ENCODE measurements at regions of chr11 and their contacts with region 1.

Region 1: DNA sequence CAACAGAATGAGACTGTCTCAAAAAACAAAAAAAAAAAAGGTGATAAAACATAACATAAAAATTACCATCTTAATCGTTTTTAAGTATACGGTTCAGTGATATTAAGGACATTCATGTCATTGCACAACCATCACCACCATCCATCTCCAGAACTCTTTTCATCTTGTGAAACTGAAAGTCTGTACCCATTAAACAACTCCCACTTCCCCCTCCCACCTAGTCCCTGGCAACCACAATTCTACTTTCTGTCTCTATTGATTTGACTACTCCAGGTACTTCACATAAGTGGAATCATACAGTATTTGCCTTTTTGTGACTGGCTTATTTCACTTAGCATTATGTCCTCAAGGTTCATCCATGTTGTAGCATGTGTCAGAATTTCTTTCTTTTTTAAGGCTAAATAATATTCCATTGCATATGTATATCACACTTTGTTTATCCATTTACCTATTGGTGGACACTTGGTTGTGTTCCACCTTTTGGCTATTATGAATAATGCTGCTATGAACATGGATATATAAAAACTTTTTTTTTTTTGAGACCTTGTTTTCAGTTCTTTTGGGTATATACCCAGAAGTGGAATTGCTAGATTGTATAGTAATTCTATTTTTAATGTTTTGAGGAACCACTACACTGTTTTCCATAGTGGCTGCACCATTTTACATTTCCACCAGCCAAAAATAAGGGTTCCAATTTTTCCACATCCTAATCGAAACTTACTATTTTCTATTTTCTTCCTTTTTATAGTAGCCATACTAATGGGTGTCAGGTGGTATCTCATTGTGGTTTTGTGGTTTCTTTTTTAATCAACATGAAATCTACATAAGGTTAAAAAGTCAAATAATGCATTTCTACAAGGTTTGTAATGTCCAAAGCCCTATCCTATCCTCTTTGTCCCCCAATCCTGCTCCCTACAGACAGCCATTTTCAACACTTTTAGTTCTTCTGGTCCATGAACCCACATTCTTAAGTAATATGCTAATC is 23.4 kb upstream of the PIK3C2A start:
- DNase-seq: peak; percentile 76
- ATAC-seq: peak; percentile 97
- H3K4me3 ChIP-seq: no peak overlapping the region
- H3K27ac ChIP-seq: no peak overlapping the region
- H3K4me1 ChIP-seq: peaks cover 15% of the 10 kb centered on the region
- H3K27me3 ChIP-seq: no peaks in the 10 kb centered on the region; a peak in 1 of 4 replicates
- CTCF ChIP-seq: no peak
- EP300 ChIP-seq: peak; percentile 49 to 81; a peak in 3 of 4 replicates
- POLR2A ChIP-seq: no peak
- RAD21 ChIP-seq: 0 out of 2 replicates have a peak, but pooled peaks have one; percentile 8

Region 2: DNA sequence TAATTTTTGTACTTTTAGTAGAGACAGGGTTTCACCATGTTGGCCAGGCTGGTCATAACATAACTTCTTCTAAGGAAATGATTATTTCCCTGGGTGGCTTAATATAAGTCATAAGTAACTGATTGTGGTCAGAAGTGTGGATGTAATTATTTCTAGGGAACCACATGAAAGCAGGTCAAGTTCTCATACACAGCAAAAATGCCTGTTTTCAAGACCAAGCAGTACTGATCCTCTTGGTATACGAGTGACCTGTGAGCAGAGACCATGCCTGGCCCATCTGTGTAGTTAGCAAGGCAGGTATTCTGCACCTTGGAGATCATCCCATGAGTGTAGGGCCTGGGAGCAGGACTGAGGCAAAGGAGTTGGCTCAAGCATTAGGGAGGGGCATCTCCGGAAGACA is 12.9 kb after region 1 on chr11:
- CTCF ChIA-PET with region 1: interaction called, 13 read pairs
- POLR2A ChIA-PET with region 1: no interaction called
- RAD21 ChIA-PET with region 1: interaction called, 3 read pairs
- SMC1A ChIA-PET with region 1: interaction called, 7 read pairs
- in situ Hi-C with region 1: no loop called
- intact Hi-C with region 1: no loop called
- DNase-seq: peak; percentile 52
- ATAC-seq: peak; percentile 98
- H3K4me3 ChIP-seq: no peak overlapping the region
- H3K27ac ChIP-seq: no peak overlapping the region
- H3K4me1 ChIP-seq: peaks cover 5% of the 10 kb centered on the region
- H3K27me3 ChIP-seq: peaks cover 0 to 3% of the 10 kb centered on the region in 2 experiments; a peak in 2 of 4 replicates
- CTCF ChIP-seq: no peak
- EP300 ChIP-seq: no peak
- POLR2A ChIP-seq: no peak
- RAD21 ChIP-seq: no peak

Region 3: GRCh38 chr11:17298302-17298701 is 67.1 kb after region 1 on chr11:
- CTCF ChIA-PET with region 1: interaction called, 10 read pairs
- POLR2A ChIA-PET with region 1: no interaction called
- RAD21 ChIA-PET with region 1: no interaction called
- SMC1A ChIA-PET with region 1: interaction called, 3 read pairs
- in situ Hi-C with region 1: no loop called
- intact Hi-C with region 1: loop called (anchors 5 kb)
- DNase-seq: no peak
- ATAC-seq: peak; percentile 91
- H3K4me3 ChIP-seq: no peak overlapping the region
- H3K27ac ChIP-seq: no peak overlapping the region
- H3K4me1 ChIP-seq: peaks cover 15% of the 10 kb centered on the region
- H3K27me3 ChIP-seq: no peaks in the 10 kb centered on the region
- CTCF ChIP-seq: no peak
- EP300 ChIP-seq: peak; percentile 13 to 30; a peak in 2 of 4 replicates
- POLR2A ChIP-seq: no peak
- RAD21 ChIP-seq: no peak

Region 4: DNA sequence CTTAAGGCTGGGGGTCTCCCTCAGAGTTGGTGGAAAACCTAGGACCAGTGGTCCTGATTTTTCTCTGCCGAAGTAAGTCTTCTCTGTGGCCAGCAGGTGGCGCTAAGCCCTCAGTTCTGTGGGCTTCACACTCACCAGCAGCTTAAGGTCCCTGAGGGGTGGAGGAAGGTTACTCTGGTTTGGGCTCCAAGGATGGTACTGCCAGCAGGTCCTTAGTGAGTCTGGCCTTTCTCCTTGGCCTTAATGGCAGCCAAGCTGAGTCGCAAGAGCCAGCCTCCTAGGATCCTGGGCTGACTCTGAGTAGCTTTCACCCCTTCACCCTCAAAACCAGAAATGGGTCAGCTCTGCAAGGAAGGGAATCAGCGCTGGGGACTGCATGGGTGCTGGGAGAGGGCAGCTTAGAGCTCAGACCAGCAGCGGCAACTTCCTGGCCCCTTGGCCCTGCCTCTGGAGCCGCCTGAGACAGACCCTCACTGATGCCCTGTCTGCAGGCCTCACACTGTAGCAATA is 152.9 kb after region 1 on chr11:
- CTCF ChIA-PET with region 1: interaction called, 40 read pairs
- POLR2A ChIA-PET with region 1: no interaction called
- RAD21 ChIA-PET with region 1: interaction called, 10 read pairs
- SMC1A ChIA-PET with region 1: interaction called, 11 read pairs
- in situ Hi-C with region 1: no loop called
- intact Hi-C with region 1: loop called (anchors 1 kb)
- DNase-seq: no peak
- ATAC-seq: peak; percentile 85
- H3K4me3 ChIP-seq: no peak overlapping the region
- H3K27ac ChIP-seq: no peak overlapping the region
- H3K4me1 ChIP-seq: no peaks in the 10 kb centered on the region
- H3K27me3 ChIP-seq: peaks cover 2% of the 10 kb centered on the region in 2 experiments; a peak in 3 of 4 replicates
- CTCF ChIP-seq: peak; percentile 82 to 90 (median 86)
- EP300 ChIP-seq: no peak
- POLR2A ChIP-seq: no peak
- RAD21 ChIP-seq: peak; percentile 89

Region 5: DNA sequence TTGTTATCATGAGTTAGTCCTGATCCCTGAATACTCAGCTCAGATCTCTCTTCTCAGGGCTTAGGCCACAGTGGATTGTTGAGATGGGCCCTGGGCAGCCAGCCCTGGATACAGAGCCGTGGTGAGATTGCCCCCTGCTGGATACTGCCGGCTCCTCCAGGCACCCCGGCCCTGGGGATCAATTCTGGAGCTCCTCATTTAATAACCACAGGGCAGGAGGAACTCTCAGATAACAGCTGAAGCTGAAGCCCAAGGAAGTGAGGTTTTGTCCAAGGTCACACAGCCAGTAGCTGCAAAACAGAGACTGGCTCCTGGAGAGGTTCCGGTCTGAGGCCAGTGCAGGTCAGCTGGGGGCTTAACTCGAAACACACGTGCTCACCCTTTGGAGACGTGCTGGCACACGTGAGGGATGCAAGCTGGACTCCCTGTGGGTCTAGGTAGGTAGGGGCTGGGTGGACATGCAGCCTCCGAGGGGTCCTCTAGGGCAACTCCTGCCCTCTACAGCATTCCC is 297.1 kb after region 1 on chr11:
- CTCF ChIA-PET with region 1: interaction called, 21 read pairs
- POLR2A ChIA-PET with region 1: no interaction called
- RAD21 ChIA-PET with region 1: interaction called, 13 read pairs
- SMC1A ChIA-PET with region 1: interaction called, 6 read pairs
- in situ Hi-C with region 1: no loop called
- intact Hi-C with region 1: loop called (anchors 1 kb)
- DNase-seq: no peak
- ATAC-seq: peak; percentile 98
- H3K4me3 ChIP-seq: no peak overlapping the region
- H3K27ac ChIP-seq: no peak overlapping the region
- H3K4me1 ChIP-seq: no peaks in the 10 kb centered on the region
- H3K27me3 ChIP-seq: peaks cover 0 to 3% of the 10 kb centered on the region in 2 experiments; a peak in 2 of 4 replicates
- CTCF ChIP-seq: peak; percentile 54 to 82 (median 77)
- EP300 ChIP-seq: no peak
- POLR2A ChIP-seq: no peak
- RAD21 ChIP-seq: peak; percentile 75

Measured in GM12878 (cell line).